ENCODE measurements at regions of chr14 and their contacts with region 1.

Region 1: DNA sequence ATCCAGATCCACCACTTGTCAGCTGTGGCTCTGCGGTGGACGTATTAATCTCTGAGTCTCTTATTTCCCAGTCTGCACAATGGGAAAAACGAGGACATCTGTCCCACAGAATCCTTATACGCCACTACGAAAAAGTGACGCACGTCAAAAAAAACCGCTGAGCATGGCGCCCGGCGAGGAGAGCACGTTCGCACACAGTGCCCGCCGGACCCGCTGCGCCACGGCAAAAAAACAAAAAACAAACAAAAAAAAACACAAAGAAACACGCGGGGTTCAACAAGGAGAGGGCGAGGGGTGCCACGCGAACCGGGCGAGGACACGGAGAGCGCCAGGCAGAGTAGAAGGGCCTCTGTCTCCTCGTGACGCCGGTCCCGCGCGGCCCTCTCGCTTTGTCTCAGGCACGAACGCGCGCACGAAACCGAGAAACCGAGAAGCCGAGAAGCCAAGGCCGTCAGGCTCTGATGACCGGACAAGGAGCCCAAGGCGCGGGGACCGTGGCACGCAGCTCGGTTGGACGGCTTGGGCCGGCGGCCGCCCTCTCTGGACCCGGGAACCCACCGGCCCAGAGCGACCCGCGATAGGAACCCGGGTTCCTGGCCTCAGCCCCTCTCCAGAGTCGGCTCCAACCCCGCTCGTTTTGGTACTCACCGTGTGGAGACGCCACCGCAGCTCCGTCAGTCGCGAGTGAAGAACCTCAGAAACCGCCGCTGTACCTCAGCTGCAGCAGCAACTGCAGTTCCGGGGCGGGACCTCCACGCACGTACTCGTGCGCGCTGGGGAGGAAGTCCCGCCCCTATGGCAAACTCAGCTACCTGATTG is at the start of gene DDX24:
- DNase-seq: peak; percentile 94 to 99 (median 96)
- ATAC-seq: peak; percentile 93
- H3K4me3 ChIP-seq: peak within 1 kb of the TSS; percentile 72 to 87
- H3K4me3 Mint-ChIP-seq: peak within 1 kb of the TSS; percentile 99
- H3K27ac ChIP-seq: peak within 1 kb of the TSS; percentile 92 to 98
- H3K27ac Mint-ChIP-seq: peak within 1 kb of the TSS; percentile 99
- H3K4me1 ChIP-seq: peaks cover 38% of the 10 kb centered on the region
- H3K4me1 Mint-ChIP-seq: peaks cover 48% of the 10 kb centered on the region
- H3K27me3 ChIP-seq: no peaks in the 10 kb centered on the region
- H3K27me3 Mint-ChIP-seq: no peaks in the 10 kb centered on the region
- CTCF ChIP-seq: no peak
- total RNA-seq, gene DDX24: 769 to 779 TPM

Region 2: DNA sequence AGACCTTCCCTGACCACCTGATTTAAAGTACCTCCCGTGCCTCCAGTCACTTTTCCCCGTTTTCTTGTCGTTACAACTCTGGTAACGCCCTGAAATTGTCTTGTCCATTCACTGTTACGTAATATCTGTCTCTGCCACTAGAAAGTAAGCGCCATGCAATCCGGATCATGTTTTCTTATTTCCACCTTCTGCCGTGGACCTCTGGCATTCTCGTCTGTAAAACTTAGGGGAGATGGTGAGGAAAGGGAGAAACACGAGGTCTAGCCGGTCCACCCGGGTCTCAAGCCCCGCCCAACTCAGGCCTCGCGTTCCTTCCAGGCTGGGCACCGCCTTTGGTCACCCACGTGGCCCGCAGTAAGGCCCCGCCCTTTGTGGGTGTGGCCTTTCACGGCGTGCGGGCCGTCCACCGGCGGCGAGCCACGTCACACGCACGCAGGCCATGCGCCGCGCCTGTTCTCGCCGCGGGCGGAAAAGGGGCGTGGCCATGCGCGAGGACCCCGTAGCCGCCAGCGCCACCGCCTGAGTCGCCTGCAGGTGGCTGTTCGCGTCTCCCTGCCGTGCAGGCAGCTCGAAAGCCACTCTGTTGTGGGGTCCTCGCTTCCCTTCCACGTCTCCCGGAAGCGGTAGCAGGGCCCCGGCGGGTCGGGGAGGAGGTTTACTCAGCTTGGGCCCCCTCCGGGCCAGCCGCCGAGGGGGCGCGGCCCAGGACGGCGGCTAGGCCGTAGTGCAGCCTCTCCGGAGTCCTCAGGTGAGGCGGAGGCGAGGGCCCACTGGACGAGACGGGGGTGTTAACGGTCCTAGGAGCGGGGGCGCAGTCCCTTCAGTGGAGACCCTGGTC is 1286.8 kb before region 1 on chr14 and contains the start of gene GOLGA5:
- CTCF ChIA-PET with region 1: no interaction called
- POLR2A ChIA-PET with region 1: no interaction called
- intact Hi-C with region 1: loop called in 1 of 2 experiments (anchors 5 kb)
- DNase-seq: peak; percentile 97 to 99 (median 98)
- ATAC-seq: peak; percentile 94
- H3K4me3 ChIP-seq: peak within 1 kb of the TSS; percentile 92 to 99
- H3K4me3 Mint-ChIP-seq: peak within 1 kb of the TSS; percentile 97
- H3K27ac ChIP-seq: peak within 1 kb of the TSS; percentile 88 to 92
- H3K27ac Mint-ChIP-seq: peak within 1 kb of the TSS; percentile 97
- H3K4me1 ChIP-seq: peaks cover 27% of the 10 kb centered on the region
- H3K4me1 Mint-ChIP-seq: peaks cover 38% of the 10 kb centered on the region
- H3K27me3 ChIP-seq: no peaks in the 10 kb centered on the region
- H3K27me3 Mint-ChIP-seq: no peaks in the 10 kb centered on the region
- CTCF ChIP-seq: no peak
- total RNA-seq, gene GOLGA5: 4.5 to 5.9 TPM

Region 3: DNA sequence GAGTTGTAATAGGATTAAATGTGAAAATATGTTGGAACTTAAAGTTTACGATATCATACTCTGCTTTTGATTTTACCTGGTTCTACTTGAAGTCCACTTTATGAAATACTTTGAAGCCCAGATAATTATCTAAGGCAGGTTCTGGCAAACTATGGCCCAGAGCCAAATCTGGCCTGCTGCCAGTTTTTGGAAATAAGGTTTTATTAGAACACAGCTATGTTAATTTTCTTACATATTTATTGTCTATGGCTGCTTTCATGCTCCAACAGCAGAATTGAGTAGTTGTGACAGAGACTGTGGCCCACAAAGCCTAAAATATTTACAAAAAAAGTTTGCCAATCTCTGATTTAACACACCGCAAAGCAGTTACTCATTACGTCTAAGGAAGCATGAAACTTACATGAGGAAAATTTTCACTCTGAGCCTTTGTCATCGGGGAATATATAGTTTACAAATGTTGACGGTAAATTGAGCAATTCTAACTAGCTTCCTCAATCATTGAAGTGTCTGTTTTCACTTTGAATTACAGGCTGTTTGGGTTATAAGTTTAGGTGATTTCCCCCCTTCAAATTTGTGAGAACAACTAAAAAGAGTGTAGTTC is 553.5 kb before region 1 on chr14:
- CTCF ChIA-PET with region 1: no interaction called
- POLR2A ChIA-PET with region 1: no interaction called
- intact Hi-C with region 1: no loop called
- DNase-seq: peak in 1 of 9 experiments; percentile 14
- ATAC-seq: no peak
- H3K4me3 ChIP-seq: no peak overlapping the region
- H3K4me3 Mint-ChIP-seq: no peak overlapping the region
- H3K27ac ChIP-seq: no peak overlapping the region
- H3K27ac Mint-ChIP-seq: no peak overlapping the region
- H3K4me1 ChIP-seq: no peaks in the 10 kb centered on the region
- H3K4me1 Mint-ChIP-seq: no peaks in the 10 kb centered on the region
- H3K27me3 ChIP-seq: no peaks in the 10 kb centered on the region
- H3K27me3 Mint-ChIP-seq: peaks cover 16% of the 10 kb centered on the region
- CTCF ChIP-seq: no peak

Region 4: GRCh38 chr14:94009767-94010166 is 70.9 kb before region 1 on chr14:
- CTCF ChIA-PET with region 1: no interaction called
- POLR2A ChIA-PET with region 1: no interaction called
- intact Hi-C with region 1: no loop called
- DNase-seq: no peak
- ATAC-seq: no peak
- H3K4me3 ChIP-seq: no peak overlapping the region
- H3K4me3 Mint-ChIP-seq: no peak overlapping the region
- H3K27ac ChIP-seq: no peak overlapping the region
- H3K27ac Mint-ChIP-seq: no peak overlapping the region
- H3K4me1 ChIP-seq: peaks cover 19% of the 10 kb centered on the region
- H3K4me1 Mint-ChIP-seq: peaks cover 36% of the 10 kb centered on the region
- H3K27me3 ChIP-seq: peaks cover 0 to 12% of the 10 kb centered on the region in 2 experiments
- H3K27me3 Mint-ChIP-seq: peaks cover 13% of the 10 kb centered on the region
- CTCF ChIP-seq: no peak

Region 5: DNA sequence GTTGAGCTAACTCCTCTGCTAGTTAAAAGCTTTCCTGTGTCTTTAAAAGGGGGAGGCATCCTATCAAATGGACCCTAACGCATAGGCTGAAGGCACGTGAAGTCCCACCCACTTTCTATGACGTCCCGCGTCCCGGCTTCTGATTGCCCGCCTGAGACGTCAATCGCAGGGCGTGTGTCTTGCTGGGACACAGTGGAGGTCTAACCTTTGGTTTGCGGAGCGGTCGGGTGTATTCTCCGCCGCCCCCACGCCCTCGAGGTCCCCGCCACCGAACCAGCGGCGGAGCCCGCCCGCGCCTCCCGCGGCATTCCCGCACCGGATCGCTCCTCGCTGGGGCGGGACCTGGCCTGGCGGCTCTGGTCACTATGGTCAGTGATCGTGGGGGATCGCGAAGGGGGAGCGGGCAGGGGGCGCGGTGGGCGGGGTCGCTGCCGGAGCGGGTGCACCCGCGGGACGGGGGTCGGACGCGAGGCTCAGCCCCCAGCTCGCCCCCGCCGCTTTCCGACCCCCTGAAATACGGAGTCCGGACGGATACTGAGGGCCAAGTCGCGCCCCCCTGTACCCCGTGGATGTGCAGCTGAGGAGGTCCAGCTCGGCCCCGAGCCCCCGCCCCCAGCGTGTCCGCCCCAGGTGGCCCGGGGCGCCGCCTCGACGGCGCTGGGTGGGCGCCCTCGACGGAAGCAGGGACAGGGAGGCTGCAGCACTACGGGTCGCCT is 54.3 kb before region 1 on chr14 and contains the start of gene OTUB2:
- CTCF ChIA-PET with region 1: interaction called, 3 read pairs
- POLR2A ChIA-PET with region 1: interaction called, 5 read pairs
- intact Hi-C with region 1: loop called in 1 of 2 experiments (anchors 1 kb)
- DNase-seq: peak; percentile 91 to 98 (median 95)
- ATAC-seq: peak; percentile 100
- H3K4me3 ChIP-seq: peak within 1 kb of the TSS; percentile 24 to 42
- H3K4me3 Mint-ChIP-seq: peak within 1 kb of the TSS; percentile 84
- H3K27ac ChIP-seq: no peak within 1 kb of the TSS
- H3K27ac Mint-ChIP-seq: no peak within 1 kb of the TSS
- H3K4me1 ChIP-seq: no peaks in the 10 kb centered on the region
- H3K4me1 Mint-ChIP-seq: peaks cover 25% of the 10 kb centered on the region
- H3K27me3 ChIP-seq: no peaks in the 10 kb centered on the region
- H3K27me3 Mint-ChIP-seq: peaks cover 3% of the 10 kb centered on the region
- CTCF ChIP-seq: no peak
- total RNA-seq, gene OTUB2: not detected

Region 6: DNA sequence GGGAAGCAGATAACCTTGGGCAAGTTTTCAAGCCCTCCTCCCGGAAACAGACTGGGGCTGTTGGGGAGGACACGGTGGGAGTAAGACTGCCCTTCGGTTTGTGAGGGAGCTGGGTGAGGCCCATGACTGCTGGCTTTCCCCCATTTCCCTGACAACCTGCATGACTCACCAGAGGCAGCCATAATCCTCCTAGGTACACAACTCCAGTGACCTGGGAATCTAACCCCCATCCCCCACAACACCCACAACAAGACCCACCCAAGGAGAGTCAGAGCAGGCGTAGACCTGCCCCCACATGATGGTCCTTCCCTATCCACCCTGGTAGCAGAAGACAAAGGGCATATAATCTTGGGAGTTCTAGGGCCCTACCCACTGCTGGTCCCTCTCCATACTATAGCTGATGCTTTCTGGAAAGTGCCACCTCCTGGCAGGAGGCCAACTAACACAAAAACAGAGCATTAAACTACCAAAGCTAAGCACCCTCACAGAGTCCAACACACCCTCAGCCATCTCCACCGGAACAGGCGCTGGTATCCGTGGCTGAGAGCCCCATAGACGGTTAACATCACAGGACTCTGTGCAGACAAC is 14.5 kb before region 1 on chr14:
- CTCF ChIA-PET with region 1: interaction called, 3 read pairs
- POLR2A ChIA-PET with region 1: interaction called, 7 read pairs
- intact Hi-C with region 1: loop called in 1 of 2 experiments (anchors 2 kb)
- DNase-seq: no peak
- ATAC-seq: no peak
- H3K4me3 ChIP-seq: no peak overlapping the region
- H3K4me3 Mint-ChIP-seq: peak overlapping the region; percentile 42
- H3K27ac ChIP-seq: no peak overlapping the region
- H3K27ac Mint-ChIP-seq: peak overlapping the region; percentile 46
- H3K4me1 ChIP-seq: peaks cover 32% of the 10 kb centered on the region
- H3K4me1 Mint-ChIP-seq: peaks cover 92% of the 10 kb centered on the region
- H3K27me3 ChIP-seq: no peaks in the 10 kb centered on the region
- H3K27me3 Mint-ChIP-seq: no peaks in the 10 kb centered on the region
- CTCF ChIP-seq: no peak

Region 7: DNA sequence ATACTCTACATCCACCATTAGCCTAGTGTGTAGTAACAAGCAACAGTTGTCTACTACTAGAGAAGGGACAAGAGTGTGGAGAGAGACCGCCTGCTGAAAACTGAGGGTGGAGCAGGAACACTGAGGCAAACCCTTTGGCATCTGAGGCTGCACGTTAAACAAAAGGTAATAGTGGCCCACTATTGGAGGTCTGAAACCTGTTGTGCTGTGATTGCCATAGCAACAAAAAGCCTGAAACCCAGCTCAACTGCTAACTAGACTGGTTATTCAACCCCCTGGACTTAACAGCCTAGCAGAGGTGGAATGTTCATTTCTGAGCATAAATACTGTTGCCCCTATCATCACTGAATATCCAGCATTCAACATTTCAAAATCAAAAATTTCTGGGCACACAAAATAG is 136.4 kb after region 1 on chr14:
- CTCF ChIA-PET with region 1: no interaction called
- POLR2A ChIA-PET with region 1: no interaction called
- intact Hi-C with region 1: no loop called
- DNase-seq: no peak
- ATAC-seq: no peak
- H3K4me3 ChIP-seq: no peak overlapping the region
- H3K4me3 Mint-ChIP-seq: no peak overlapping the region
- H3K27ac ChIP-seq: no peak overlapping the region
- H3K27ac Mint-ChIP-seq: no peak overlapping the region
- H3K4me1 ChIP-seq: no peaks in the 10 kb centered on the region
- H3K4me1 Mint-ChIP-seq: no peaks in the 10 kb centered on the region
- H3K27me3 ChIP-seq: no peaks in the 10 kb centered on the region
- H3K27me3 Mint-ChIP-seq: peaks cover 21% of the 10 kb centered on the region
- CTCF ChIP-seq: no peak

Region 8: DNA sequence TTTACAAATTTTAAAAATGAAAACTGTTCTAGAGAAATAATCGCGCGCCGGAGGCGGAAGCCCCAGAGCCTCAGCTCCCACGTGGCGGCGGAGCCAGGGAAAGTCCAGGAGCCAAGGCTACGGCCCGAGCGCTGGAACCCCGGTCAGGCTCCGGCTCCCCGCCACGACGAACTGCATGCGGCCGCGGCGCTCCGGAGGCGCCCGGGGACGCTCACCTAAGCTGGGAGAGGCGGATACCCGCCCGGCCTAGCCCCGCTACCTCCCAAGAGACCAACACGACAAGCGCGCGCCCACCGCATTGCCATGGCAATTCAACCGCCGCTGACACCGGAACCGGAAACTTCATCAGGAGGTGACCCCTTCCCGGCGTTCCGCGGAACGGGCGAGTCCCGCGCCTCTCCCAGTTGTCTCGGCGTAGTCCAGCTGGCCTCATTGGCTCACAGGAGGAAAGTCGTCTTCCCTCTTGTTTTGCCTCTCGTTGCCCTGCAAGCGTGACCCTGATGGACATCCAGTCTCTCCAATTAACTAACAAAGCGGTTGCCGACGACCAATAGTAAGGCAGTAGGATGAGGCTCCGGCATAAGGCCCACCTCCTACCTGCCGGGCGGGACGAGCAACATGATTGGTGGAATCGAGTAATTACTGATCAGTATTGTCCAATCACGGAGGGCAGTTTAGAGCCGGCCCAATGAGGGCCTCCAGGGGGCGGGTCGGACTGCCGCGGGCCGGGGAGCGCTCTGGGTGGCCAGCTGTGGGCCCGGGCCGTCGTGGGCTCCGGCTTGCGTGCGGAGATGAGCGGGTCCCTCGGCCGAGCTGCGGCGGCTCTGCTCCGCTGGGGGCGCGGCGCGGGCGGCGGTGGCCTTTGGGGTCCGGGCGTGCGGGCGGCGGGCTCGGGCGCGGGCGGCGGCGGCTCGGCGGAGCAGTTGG is 1453.9 kb after region 1 on chr14 and contains the start of gene GLRX5:
- CTCF ChIA-PET with region 1: no interaction called
- POLR2A ChIA-PET with region 1: no interaction called
- intact Hi-C with region 1: loop called in 1 of 2 experiments (anchors 5 kb)
- DNase-seq: peak; percentile 94 to 100 (median 97)
- ATAC-seq: peak; percentile 85
- H3K4me3 ChIP-seq: peak within 1 kb of the TSS; percentile 68 to 76
- H3K4me3 Mint-ChIP-seq: peak within 1 kb of the TSS; percentile 90
- H3K27ac ChIP-seq: peak within 1 kb of the TSS; percentile 77 to 92
- H3K27ac Mint-ChIP-seq: peak within 1 kb of the TSS; percentile 95
- H3K4me1 ChIP-seq: peaks cover 46% of the 10 kb centered on the region
- H3K4me1 Mint-ChIP-seq: peaks cover 71% of the 10 kb centered on the region
- H3K27me3 ChIP-seq: no peaks in the 10 kb centered on the region
- H3K27me3 Mint-ChIP-seq: no peaks in the 10 kb centered on the region
- CTCF ChIP-seq: no peak
- total RNA-seq, gene GLRX5: 13.7 to 15.2 TPM